IMR-90 (cell line): ENCODE measurements at regions of chr9 and their contacts with region 1.

Region 1: DNA sequence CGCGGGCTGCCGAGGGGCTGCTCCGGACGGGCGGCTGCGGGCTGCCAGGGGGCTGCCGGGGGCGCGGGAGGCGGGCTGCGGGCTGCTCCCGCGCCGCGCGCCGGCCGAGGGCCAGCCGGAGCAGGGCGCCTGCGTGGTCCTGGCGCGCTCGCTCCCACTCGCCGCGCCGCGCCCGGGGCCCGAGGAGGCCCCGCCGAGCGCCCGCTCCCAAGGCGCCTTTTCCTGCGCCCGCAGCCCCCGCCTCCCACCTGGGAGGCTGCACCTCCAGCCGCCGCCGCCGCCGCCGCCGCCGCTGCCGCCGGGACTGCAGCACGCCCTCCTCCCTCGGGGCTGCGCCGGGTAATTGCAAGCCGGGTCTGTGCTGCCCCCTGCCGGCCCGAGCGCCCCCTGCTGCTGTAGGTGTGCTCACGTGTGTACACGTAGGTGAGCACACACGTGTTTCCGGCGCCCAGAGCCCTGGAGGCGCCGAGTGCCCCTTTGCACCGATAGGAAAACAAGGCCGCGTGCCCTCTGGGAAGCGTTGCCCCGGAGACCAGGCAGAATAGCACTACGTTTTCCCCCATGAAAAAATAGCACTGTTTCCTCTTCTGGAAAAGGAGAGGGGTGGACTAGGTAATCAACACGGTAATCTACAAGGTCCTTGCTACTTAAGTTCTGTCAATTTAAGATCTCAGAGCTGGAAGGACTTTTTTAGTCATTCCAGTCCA is at the start of gene EPB41L4B:
- DNase-seq: peak; percentile 69
- ATAC-seq: peak; percentile 95
- H3K4me3 ChIP-seq: peak within 1 kb of the TSS; percentile 45
- H3K27ac ChIP-seq: no peak within 1 kb of the TSS
- H3K4me1 ChIP-seq: peaks cover 2% of the 10 kb centered on the region
- H3K27me3 ChIP-seq: peaks cover 51% of the 10 kb centered on the region
- CTCF ChIP-seq: peak; percentile 93
- POLR2A ChIP-seq: peak; percentile 44; the same call in 1 of the 2 replicates
- RAD21 ChIP-seq: peak; percentile 89
- total RNA-seq, gene EPB41L4B: 0.54 and 0.56 TPM in 2 replicates

Region 2: GRCh38 chr9:108933718-108934322 is 387.1 kb before region 1 on chr9 and contains the start of gene ELP1:
- CTCF ChIA-PET with region 1: no interaction called
- POLR2A ChIA-PET with region 1: no interaction called
- dilution Hi-C with region 1: no loop called
- in situ Hi-C with region 1: no loop called
- intact Hi-C with region 1: loop called (anchors 5 kb)
- DNase-seq: peak; percentile 94
- ATAC-seq: peak; percentile 91
- H3K4me3 ChIP-seq: peak within 1 kb of the TSS; percentile 95
- H3K27ac ChIP-seq: peak within 1 kb of the TSS; percentile 92
- H3K4me1 ChIP-seq: no peaks in the 10 kb centered on the region; the same call in 1 of the 2 replicates
- H3K27me3 ChIP-seq: no peaks in the 10 kb centered on the region
- CTCF ChIP-seq: peak; percentile 48
- POLR2A ChIP-seq: peak; percentile 50; the same call in 1 of the 2 replicates
- RAD21 ChIP-seq: peak; percentile 14; the same call in 1 of the 2 replicates
- total RNA-seq, gene ELP1: 39.7 and 43.2 TPM in 2 replicates

Region 3: GRCh38 chr9:109063760-109064159 is 257.1 kb before region 1 on chr9:
- CTCF ChIA-PET with region 1: no interaction called
- POLR2A ChIA-PET with region 1: no interaction called
- dilution Hi-C with region 1: no loop called
- in situ Hi-C with region 1: loop called (anchors 25 kb)
- intact Hi-C with region 1: no loop called
- DNase-seq: peak; percentile 57
- ATAC-seq: peak; percentile 76
- H3K4me3 ChIP-seq: no peak overlapping the region
- H3K27ac ChIP-seq: no peak overlapping the region; the same call in 1 of the 2 replicates
- H3K4me1 ChIP-seq: peaks cover 5% of the 10 kb centered on the region; the same call in 1 of the 2 replicates
- H3K27me3 ChIP-seq: no peaks in the 10 kb centered on the region
- CTCF ChIP-seq: 0 out of 2 replicates have a peak, but pooled peaks have one; percentile 10
- POLR2A ChIP-seq: no peak
- RAD21 ChIP-seq: peak; percentile 17; the same call in 1 of the 2 replicates

Region 4: DNA sequence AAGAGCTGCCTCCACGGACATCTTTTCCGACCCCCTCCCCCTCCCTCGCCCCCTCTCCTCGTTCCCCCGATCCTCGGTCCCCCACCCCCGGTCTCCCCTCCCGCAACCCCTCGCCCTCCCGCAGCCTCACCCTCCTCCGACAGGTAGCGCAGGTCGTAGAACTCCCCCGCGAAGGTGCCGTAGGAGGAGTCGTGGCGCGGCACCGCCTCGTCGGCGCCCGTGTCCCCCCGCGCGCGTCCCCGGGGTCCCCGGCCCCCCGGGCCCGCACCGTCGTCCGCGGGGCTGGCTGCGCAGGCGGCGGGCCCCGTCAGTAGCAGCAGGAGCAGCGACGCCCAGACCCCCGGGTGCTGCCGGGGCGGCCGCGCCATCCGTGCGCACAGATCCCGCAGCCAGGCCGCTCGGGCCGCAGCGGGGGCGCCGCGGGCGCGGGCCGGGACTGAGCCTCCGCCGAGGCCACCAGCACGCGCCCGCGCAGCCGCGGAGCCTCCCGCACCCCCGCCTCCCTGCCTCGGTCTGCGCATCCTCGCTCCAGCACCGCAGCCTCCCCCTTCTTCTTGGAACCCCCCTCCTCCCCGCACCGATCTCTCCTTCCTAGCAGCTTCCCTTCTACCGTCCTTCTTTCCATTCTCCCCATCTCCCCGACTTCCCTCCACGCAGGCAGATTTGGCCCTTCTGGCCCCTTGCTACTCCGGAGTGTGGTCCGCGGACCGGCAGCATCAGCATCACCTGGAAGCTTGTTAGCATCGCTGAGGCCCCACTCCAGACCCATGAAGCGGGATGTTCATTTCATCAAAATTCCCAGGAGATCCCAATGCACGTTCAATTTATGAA is 153.9 kb before region 1 on chr9 and contains the start of gene FRRS1L:
- CTCF ChIA-PET with region 1: no interaction called
- POLR2A ChIA-PET with region 1: no interaction called
- dilution Hi-C with region 1: no loop called
- in situ Hi-C with region 1: no loop called
- intact Hi-C with region 1: no loop called
- DNase-seq: no peak
- ATAC-seq: peak; percentile 63
- H3K4me3 ChIP-seq: peak within 1 kb of the TSS; percentile 20
- H3K27ac ChIP-seq: no peak within 1 kb of the TSS
- H3K4me1 ChIP-seq: no peaks in the 10 kb centered on the region
- H3K27me3 ChIP-seq: peaks cover 46% of the 10 kb centered on the region
- CTCF ChIP-seq: no peak
- POLR2A ChIP-seq: no peak
- RAD21 ChIP-seq: no peak
- total RNA-seq, gene FRRS1L: under 0.01 TPM in 1 of 2 replicates, not detected in the other

Region 5: DNA sequence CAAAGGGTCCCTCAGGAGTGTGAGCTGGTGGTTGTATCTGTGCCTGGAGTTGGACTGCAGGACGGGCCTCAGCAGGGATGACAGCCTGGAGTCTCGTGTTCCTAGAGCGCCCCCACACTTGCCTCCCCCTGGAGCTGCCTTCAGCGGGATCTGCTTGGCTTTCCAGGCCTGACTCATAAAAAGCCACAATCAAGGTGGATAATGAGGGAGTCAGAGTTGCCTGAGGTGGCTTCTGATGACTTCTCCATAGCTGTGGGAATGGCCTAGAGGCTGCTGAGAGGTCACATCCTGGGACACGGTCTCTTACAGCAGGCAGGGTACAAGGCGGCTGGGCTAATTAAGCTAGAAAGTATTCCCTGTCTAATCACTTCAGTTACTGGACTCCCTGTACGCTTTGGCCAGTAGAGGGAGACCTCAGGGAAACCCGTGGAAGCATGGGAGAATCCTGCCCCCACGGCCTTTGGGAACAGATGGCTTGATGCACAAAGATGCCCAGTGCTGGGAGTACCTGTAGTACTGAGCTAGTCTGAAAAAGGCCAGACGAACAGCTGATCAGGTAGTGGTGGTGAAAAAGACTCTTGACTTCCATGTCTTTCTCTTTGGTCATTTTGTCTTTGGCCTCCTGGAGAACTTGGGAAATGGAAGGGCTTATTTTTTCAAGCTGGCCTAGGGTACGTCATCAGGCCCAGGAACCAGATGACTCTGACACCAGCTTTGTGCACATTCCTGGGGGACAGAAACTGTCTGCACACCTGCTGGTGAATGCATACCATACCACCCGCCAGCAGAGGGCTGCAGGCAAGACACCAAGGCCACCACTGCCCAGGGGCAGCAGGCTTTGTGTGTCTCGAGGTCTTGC is 137.7 kb before region 1 on chr9:
- CTCF ChIA-PET with region 1: interaction called, 3 read pairs
- POLR2A ChIA-PET with region 1: no interaction called
- dilution Hi-C with region 1: no loop called
- in situ Hi-C with region 1: loop called (anchors 25 kb)
- intact Hi-C with region 1: loop called (anchors 2 kb)
- DNase-seq: peak; percentile 15
- ATAC-seq: peak; percentile 61
- H3K4me3 ChIP-seq: no peak overlapping the region
- H3K27ac ChIP-seq: no peak overlapping the region
- H3K4me1 ChIP-seq: no peaks in the 10 kb centered on the region
- H3K27me3 ChIP-seq: peaks cover 16% of the 10 kb centered on the region
- CTCF ChIP-seq: peak; percentile 40
- POLR2A ChIP-seq: no peak
- RAD21 ChIP-seq: peak; percentile 31; the same call in 1 of the 2 replicates

Region 6: GRCh38 chr9:109244157-109245132 is 76.5 kb before region 1 on chr9:
- CTCF ChIA-PET with region 1: interaction called, 5 read pairs
- POLR2A ChIA-PET with region 1: no interaction called
- dilution Hi-C with region 1: no loop called
- in situ Hi-C with region 1: loop called (anchors 5 kb)
- intact Hi-C with region 1: loop called (anchors 1 kb)
- DNase-seq: peak; percentile 65
- ATAC-seq: peak; percentile 95
- H3K4me3 ChIP-seq: no peak overlapping the region
- H3K27ac ChIP-seq: no peak overlapping the region
- H3K4me1 ChIP-seq: peaks cover 3% of the 10 kb centered on the region
- H3K27me3 ChIP-seq: peaks cover 3% of the 10 kb centered on the region
- CTCF ChIP-seq: peak; percentile 73
- POLR2A ChIP-seq: no peak
- RAD21 ChIP-seq: peak; percentile 65